BJ (cell line): ENCODE measurements at regions of chr6 and their contacts with region 1.

Region 1: GRCh38 chr6:42901536-42901957 is 14.3 kb upstream of the PTCRA start:
- DNase-seq: no peak
- H3K4me3 ChIP-seq: no peak overlapping the region
- H3K27me3 ChIP-seq: no peaks in the 10 kb centered on the region
- CTCF ChIP-seq: peak; percentile 74

Region 2: DNA sequence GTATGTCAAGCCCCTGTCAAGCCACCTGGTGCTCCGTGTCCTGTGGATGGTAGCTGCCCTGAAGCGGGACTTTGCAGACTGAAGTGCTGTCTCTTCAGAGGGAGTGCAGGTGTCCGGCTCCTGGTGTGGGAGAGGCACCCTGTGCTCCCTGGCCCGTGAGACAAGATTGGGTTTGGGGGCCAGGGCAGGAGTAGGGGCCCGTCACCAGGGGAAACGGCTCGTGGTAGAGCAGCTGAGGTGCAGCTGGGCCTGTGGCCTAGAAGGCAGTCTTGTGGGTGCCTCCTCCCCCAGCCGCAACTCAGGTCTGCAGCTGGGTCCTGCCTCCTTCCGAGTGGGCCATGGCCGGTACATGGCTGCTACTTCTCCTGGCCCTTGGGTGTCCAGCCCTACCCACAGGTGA is 14.2 kb after region 1 on chr6 and contains the start of gene PTCRA:
- CTCF ChIA-PET with region 1: interaction called, 23 read pairs
- POLR2A ChIA-PET with region 1: no interaction called
- DNase-seq: no peak
- H3K4me3 ChIP-seq: no peak within 1 kb of the TSS
- H3K27me3 ChIP-seq: peaks cover 2% of the 10 kb centered on the region
- CTCF ChIP-seq: no peak
- polyA plus RNA-seq, gene PTCRA: not detected in 2 replicates

Region 3: DNA sequence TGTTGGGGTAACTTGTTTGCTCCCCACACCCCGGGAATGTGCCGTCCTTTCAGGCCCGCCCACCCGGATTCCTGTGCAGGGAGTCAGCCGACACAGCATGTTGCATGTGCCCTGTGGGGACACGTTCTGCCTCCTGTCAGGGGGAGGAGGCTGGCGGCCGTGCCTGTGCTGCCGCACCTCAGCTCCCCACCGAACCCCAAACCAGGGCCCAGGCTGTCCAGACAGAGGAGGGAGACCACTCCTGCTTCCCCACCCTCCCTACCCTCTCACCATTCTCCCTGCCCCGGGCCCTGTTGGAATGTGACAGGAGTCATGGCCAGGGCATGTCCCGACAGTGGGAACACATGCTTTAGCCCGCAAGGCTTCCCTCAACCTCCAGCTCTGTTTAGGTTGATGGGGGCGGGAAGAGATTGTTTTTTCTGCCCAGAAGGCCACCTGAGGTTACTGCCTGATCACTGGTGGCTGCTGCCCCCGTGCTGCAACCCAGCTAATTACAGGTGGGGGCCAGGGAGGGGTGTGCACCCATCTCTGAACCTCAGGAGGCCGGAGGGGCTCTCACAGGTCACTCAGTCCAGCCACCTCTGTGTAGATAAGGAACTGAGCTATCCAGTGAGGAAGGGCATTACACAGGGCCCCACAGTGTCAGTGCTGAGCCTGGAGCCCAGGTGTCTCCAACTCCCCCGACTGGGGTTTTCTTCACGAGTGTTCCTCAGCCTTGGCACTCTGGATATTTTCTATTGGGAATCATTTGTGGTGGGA is 595.0 kb after region 1 on chr6:
- CTCF ChIA-PET with region 1: no interaction called
- POLR2A ChIA-PET with region 1: no interaction called
- DNase-seq: no peak
- H3K4me3 ChIP-seq: no peak overlapping the region
- H3K27me3 ChIP-seq: no peaks in the 10 kb centered on the region
- CTCF ChIP-seq: peak; percentile 76